A549 (cell line): ENCODE measurements at regions of chr17 and their contacts with region 1.

Region 1: DNA sequence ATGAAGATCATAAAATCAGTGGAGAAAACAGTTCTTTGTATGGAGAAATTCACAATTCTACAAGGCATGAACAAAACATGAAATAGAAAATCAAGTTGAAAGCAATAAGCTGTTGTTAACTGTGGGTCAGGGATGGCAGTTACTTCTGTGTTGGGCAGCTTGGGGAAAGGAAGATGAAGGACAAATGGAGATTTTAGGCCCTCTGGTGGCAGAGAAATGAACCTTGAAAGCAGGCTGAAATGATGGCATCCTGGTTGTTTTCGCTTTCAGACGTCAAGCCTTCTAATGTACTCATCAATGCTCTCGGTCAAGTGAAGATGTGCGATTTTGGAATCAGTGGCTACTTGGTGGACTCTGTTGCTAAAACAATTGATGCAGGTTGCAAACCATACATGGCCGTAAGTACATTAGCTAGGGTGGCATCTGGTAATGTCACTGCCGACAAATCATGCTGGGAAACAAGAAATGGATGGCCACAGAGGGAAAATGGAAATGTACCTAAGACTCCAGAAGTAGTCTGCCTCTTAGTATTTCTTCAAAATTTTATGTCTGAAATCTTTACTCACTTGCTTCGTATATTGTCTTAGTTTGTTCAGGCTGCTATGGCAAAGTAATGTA is 108.9 kb downstream of the MAP2K6 start:
- DNase-seq: peak; percentile 28 to 72
- ATAC-seq: peak; percentile 80 to 88
- H3K4me3 ChIP-seq: no peak overlapping the region
- H3K27ac ChIP-seq: no peak overlapping the region
- H3K4me1 ChIP-seq: no peaks in the 10 kb centered on the region
- CTCF ChIP-seq: peak; percentile 82
- EP300 ChIP-seq: no peak
- POLR2A ChIP-seq: no peak
- RAD21 ChIP-seq: peak; percentile 88

Region 2: DNA sequence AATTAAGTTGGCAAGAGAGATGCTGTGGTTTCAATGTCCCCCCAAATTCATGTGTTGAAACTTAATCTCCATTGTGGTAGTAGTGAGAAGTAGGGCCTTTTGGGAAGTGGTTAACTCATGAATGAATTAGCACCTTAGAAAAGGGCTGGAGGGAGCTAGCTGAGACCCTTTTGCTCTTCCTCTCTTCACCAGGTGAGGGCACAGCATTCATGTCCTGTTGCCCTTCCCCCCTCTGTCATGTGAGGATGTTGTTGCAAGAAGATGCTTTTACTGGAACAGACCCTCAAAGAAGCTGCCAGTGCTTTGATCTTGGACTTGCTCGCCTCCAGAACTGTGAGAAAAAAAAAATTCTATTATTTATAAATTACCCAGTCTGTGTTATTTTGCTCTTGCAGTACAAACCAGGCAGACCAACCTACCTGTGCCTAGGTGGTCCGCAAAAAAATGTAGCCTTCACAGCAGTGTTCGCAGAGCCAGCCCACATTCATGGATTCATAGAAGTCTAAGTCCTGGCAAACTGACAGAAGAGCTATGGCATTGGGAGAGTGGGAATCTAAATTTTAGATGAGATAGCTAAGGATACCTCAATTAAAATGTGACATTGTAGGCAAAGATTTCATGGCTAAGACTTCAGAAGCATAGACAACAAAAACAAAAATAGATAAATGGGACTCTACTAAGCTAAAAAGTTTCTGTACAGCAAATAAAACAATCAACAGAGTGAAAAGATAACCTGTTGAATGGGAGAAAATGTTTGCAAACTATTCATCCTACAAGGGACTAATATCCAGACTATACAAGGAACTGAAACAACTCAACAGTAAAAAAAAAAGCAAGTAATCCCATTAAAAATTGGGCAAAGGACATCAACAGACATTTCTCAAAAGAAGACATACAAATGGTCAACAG is 164.4 kb before region 1 on chr17:
- CTCF ChIA-PET with region 1: interaction called, 49 read pairs
- POLR2A ChIA-PET with region 1: no interaction called
- DNase-seq: peak in 1 of 2 experiments; percentile 29
- ATAC-seq: peak in 1 of 2 experiments; percentile 64; a peak in 2 of 6 replicates
- H3K4me3 ChIP-seq: no peak overlapping the region
- H3K27ac ChIP-seq: no peak overlapping the region
- H3K4me1 ChIP-seq: no peaks in the 10 kb centered on the region
- CTCF ChIP-seq: peak; percentile 36
- EP300 ChIP-seq: no peak
- POLR2A ChIP-seq: no peak
- RAD21 ChIP-seq: peak; percentile 32 to 48; a peak in 3 of 5 replicates

Region 3: DNA sequence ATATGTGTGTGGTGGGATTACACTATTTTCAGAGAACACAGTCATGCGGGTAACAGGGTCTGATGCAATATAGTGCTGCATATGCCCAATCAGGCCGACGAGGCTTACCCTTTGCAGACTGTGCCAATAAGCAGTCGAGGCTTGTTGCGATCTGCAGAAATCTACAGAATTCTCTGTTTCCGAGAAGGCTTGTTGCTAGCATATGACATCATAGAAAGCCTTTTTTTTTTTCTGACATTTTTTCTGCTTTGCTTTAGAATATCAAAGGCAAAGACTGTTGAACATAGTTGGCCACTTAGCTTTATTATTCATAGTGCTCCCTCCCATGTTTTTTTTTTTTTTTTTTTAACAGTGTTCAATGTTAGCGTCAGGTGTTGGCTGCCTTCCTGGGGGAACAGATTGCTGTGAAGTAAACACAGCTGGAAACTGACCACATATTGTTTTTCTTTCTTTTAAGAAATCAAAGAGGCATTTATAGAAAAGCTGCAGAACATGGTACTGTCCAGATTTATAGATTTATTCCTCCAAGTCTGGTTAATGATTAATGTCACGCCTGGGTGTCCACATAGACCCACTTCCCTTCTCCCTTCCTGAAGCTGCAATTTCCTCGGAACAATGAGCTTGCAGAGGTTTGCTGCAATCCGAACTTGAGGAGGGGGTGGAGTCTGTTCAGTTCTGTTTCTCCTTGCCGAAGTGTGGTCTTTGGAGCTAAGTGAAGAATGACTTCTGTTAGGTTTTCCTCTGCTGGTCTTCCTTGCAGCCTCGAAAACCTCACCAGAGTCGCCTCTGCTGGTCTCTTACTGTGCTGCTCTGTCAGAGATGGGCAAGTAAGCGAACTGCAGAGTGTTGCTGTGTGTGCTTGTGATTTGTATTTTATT is 21.5 kb before region 1 on chr17:
- CTCF ChIA-PET with region 1: interaction called, 133 read pairs
- POLR2A ChIA-PET with region 1: no interaction called
- DNase-seq: peak; percentile 37 to 63
- ATAC-seq: peak; percentile 91 to 92
- H3K4me3 ChIP-seq: peak overlapping the region; percentile 30
- H3K27ac ChIP-seq: peak overlapping the region; percentile 55 to 84
- H3K4me1 ChIP-seq: peaks cover 34% of the 10 kb centered on the region
- CTCF ChIP-seq: no peak
- EP300 ChIP-seq: no peak
- POLR2A ChIP-seq: no peak
- RAD21 ChIP-seq: no peak

Region 4: GRCh38 chr17:69575346-69575761 is 52.0 kb after region 1 on chr17:
- CTCF ChIA-PET with region 1: interaction called, 16 read pairs
- POLR2A ChIA-PET with region 1: no interaction called
- DNase-seq: peak in 1 of 2 experiments; percentile 27
- ATAC-seq: no peak; a peak in 1 of 6 replicates
- H3K4me3 ChIP-seq: no peak overlapping the region
- H3K27ac ChIP-seq: peak overlapping the region; percentile 65 to 80
- H3K4me1 ChIP-seq: peaks cover 39% of the 10 kb centered on the region
- CTCF ChIP-seq: no peak
- EP300 ChIP-seq: no peak
- POLR2A ChIP-seq: no peak
- RAD21 ChIP-seq: no peak

Region 5: DNA sequence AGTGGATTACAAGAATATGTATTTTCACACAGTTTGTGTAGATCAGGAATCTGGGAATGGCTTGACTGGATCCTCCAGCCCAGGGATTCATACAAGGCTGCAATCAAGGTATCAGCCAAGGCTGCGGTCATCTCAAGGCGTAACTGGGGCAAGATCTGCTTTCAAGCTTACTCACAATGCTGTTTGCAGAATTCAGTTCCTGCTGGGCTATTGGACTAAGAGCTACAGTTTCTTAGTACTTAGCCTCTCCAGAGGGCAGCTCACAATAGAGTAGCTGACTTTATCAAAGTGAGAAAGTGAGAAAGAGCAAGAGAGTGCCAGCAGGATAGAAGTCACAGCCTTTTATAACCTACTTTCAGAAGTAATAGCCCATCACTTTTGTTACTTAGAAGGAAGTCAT is 102.1 kb after region 1 on chr17:
- CTCF ChIA-PET with region 1: no interaction called
- POLR2A ChIA-PET with region 1: no interaction called
- DNase-seq: no peak
- ATAC-seq: no peak
- H3K4me3 ChIP-seq: no peak overlapping the region
- H3K27ac ChIP-seq: no peak overlapping the region
- H3K4me1 ChIP-seq: no peaks in the 10 kb centered on the region
- CTCF ChIP-seq: no peak
- EP300 ChIP-seq: no peak
- POLR2A ChIP-seq: no peak
- RAD21 ChIP-seq: no peak

Region 6: GRCh38 chr17:70622368-70623260 is 1099.3 kb after region 1 on chr17:
- CTCF ChIA-PET with region 1: interaction called, 44 read pairs
- POLR2A ChIA-PET with region 1: no interaction called
- DNase-seq: peak; percentile 25 to 34
- ATAC-seq: peak; percentile 54 to 80; a peak in 4 of 6 replicates
- H3K4me3 ChIP-seq: no peak overlapping the region
- H3K27ac ChIP-seq: no peak overlapping the region
- H3K4me1 ChIP-seq: no peaks in the 10 kb centered on the region
- CTCF ChIP-seq: peak; percentile 67
- EP300 ChIP-seq: no peak
- POLR2A ChIP-seq: no peak
- RAD21 ChIP-seq: peak; percentile 72 to 76